ENCODE measurements at regions of chr17 and their contacts with region 1.

Region 1: DNA sequence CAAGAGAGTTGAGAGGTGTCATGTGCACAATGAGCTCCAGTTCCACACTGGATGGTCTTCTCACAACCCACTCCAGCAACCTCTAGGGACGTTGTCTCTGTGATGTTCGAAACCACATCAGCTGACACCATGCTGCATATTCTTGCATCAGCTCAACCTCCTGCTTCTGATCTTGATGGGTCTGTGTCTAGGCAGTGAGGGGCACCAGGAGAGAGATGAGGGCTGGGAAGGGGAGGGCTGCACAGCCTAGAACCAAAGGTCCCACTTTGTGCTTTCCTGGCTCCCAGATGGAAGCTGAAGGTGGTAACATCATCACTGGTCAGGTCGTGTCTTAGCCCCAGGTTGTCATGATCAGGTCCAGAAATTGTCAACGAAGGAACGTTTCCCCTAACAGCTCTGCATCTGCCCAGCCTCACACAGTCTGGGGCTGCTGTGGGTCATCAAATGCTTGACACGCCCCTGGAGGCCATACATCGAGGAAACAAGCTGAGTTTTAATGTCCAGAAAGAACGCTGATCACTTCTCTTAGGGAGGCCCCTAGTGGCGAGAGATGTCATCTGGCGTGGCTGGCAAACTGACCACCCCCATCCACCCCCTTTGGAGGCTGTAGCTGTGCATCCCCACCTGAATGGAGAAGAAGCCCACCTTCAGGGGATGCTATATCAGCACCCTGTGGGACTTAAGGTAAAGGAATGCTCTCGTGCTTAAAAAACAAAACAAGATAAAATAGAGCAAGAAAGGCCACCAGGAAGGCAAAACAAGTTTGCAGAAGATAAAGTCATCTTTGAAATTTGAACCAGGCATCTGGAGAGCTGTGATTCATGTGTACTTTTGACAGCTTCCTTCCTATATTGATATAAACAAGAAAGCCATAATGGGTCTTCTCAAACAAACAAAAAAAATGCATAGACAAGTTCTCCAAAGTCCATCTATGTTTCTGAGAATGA is 58.3 kb downstream of the WIPI1 start:
- DNase-seq: peak; percentile 78 to 84
- H3K4me3 ChIP-seq: no peak overlapping the region
- H3K4me3 Mint-ChIP-seq: no peak overlapping the region
- H3K27ac Mint-ChIP-seq: no peak overlapping the region
- H3K4me1 ChIP-seq: no peaks in the 10 kb centered on the region
- H3K4me1 Mint-ChIP-seq: no peaks in the 10 kb centered on the region
- H3K27me3 ChIP-seq: no peaks in the 10 kb centered on the region
- H3K27me3 Mint-ChIP-seq: peaks cover 2% of the 10 kb centered on the region
- CTCF ChIP-seq: peak; percentile 87 to 89

Region 2: GRCh38 chr17:68247445-68248198 is 151.3 kb before region 1 on chr17 and contains the start of gene AMZ2:
- CTCF ChIA-PET with region 1: interaction called, 11 read pairs
- POLR2A ChIA-PET with region 1: no interaction called
- intact Hi-C with region 1: no loop called
- DNase-seq: peak; percentile 93 to 97
- H3K4me3 ChIP-seq: peak within 1 kb of the TSS; percentile 79
- H3K4me3 Mint-ChIP-seq: peak within 1 kb of the TSS; percentile 97
- H3K27ac Mint-ChIP-seq: peak within 1 kb of the TSS; percentile 81
- H3K4me1 ChIP-seq: peaks cover 6% of the 10 kb centered on the region
- H3K4me1 Mint-ChIP-seq: peaks cover 7% of the 10 kb centered on the region
- H3K27me3 ChIP-seq: no peaks in the 10 kb centered on the region
- H3K27me3 Mint-ChIP-seq: peaks cover 12% of the 10 kb centered on the region
- CTCF ChIP-seq: no peak
- total RNA-seq, gene AMZ2: 52.2 and 60.2 TPM in 2 replicates

Region 3: GRCh38 chr17:68260051-68260762 is 138.8 kb before region 1 on chr17:
- CTCF ChIA-PET with region 1: interaction called, 15 read pairs
- POLR2A ChIA-PET with region 1: no interaction called
- intact Hi-C with region 1: loop called (anchors 1 kb)
- DNase-seq: no peak
- H3K4me3 ChIP-seq: no peak overlapping the region
- H3K4me3 Mint-ChIP-seq: peak overlapping the region; percentile 79
- H3K27ac Mint-ChIP-seq: peak overlapping the region; percentile 57
- H3K4me1 ChIP-seq: peaks cover 8% of the 10 kb centered on the region; the same call in 1 of the 2 replicates
- H3K4me1 Mint-ChIP-seq: no peaks in the 10 kb centered on the region
- H3K27me3 ChIP-seq: no peaks in the 10 kb centered on the region
- H3K27me3 Mint-ChIP-seq: no peaks in the 10 kb centered on the region
- CTCF ChIP-seq: no peak

Region 4: GRCh38 chr17:68291844-68292695 is 106.9 kb before region 1 on chr17:
- CTCF ChIA-PET with region 1: interaction called, 14 read pairs
- POLR2A ChIA-PET with region 1: interaction called, 5 read pairs
- intact Hi-C with region 1: loop called (anchors 1 kb)
- DNase-seq: peak; percentile 79 to 86
- H3K4me3 ChIP-seq: peak overlapping the region; percentile 87
- H3K4me3 Mint-ChIP-seq: peak overlapping the region; percentile 76
- H3K27ac Mint-ChIP-seq: peak overlapping the region; percentile 76
- H3K4me1 ChIP-seq: peaks cover 6% of the 10 kb centered on the region; the same call in 1 of the 2 replicates
- H3K4me1 Mint-ChIP-seq: peaks cover 8% of the 10 kb centered on the region
- H3K27me3 ChIP-seq: no peaks in the 10 kb centered on the region
- H3K27me3 Mint-ChIP-seq: peaks cover 3% of the 10 kb centered on the region
- CTCF ChIP-seq: peak in 1 of 2 experiments; percentile 26

Region 5: GRCh38 chr17:68314916-68315535 is 83.9 kb before region 1 on chr17:
- CTCF ChIA-PET with region 1: no interaction called
- POLR2A ChIA-PET with region 1: no interaction called
- intact Hi-C with region 1: no loop called
- DNase-seq: no peak
- H3K4me3 ChIP-seq: no peak overlapping the region
- H3K4me3 Mint-ChIP-seq: no peak overlapping the region
- H3K27ac Mint-ChIP-seq: no peak overlapping the region
- H3K4me1 ChIP-seq: no peaks in the 10 kb centered on the region
- H3K4me1 Mint-ChIP-seq: peaks cover 11% of the 10 kb centered on the region
- H3K27me3 ChIP-seq: no peaks in the 10 kb centered on the region
- H3K27me3 Mint-ChIP-seq: no peaks in the 10 kb centered on the region
- CTCF ChIP-seq: no peak

Region 6: GRCh38 chr17:68327823-68328570 is 71.0 kb before region 1 on chr17:
- CTCF ChIA-PET with region 1: interaction called, 10 read pairs
- POLR2A ChIA-PET with region 1: interaction called, 3 read pairs
- intact Hi-C with region 1: loop called (anchors 2 kb)
- DNase-seq: no peak
- H3K4me3 ChIP-seq: no peak overlapping the region
- H3K4me3 Mint-ChIP-seq: peak overlapping the region; percentile 44
- H3K27ac Mint-ChIP-seq: peak overlapping the region; percentile 79
- H3K4me1 ChIP-seq: peaks cover 45% of the 10 kb centered on the region
- H3K4me1 Mint-ChIP-seq: peaks cover 37% of the 10 kb centered on the region
- H3K27me3 ChIP-seq: no peaks in the 10 kb centered on the region
- H3K27me3 Mint-ChIP-seq: peaks cover 10% of the 10 kb centered on the region
- CTCF ChIP-seq: no peak

Region 7: DNA sequence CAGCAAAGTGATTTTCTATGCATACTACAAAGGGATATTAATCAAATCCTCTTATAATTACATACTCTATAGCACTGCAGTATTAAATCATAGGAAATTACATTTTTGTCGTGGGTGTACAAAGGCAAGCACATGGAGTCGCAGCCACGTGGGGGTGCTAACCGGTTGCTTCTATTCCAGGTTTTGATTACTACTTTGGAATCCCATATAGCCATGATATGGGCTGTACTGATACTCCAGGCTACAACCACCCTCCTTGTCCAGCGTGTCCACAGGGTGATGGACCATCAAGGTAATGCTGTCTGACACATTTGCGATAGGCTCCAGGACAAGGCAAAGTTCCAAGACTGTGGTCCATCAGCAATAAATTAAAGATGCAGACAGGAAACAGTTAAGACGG is 47.6 kb before region 1 on chr17:
- CTCF ChIA-PET with region 1: interaction called, 3 read pairs
- POLR2A ChIA-PET with region 1: interaction called, 3 read pairs
- intact Hi-C with region 1: loop called (anchors 5 kb)
- DNase-seq: no peak
- H3K4me3 ChIP-seq: no peak overlapping the region
- H3K4me3 Mint-ChIP-seq: no peak overlapping the region
- H3K27ac Mint-ChIP-seq: no peak overlapping the region
- H3K4me1 ChIP-seq: no peaks in the 10 kb centered on the region
- H3K4me1 Mint-ChIP-seq: no peaks in the 10 kb centered on the region
- H3K27me3 ChIP-seq: no peaks in the 10 kb centered on the region
- H3K27me3 Mint-ChIP-seq: no peaks in the 10 kb centered on the region
- CTCF ChIP-seq: no peak

Region 8: GRCh38 chr17:68435876-68436842 is 37.2 kb after region 1 on chr17:
- CTCF ChIA-PET with region 1: interaction called, 7 read pairs
- POLR2A ChIA-PET with region 1: no interaction called
- intact Hi-C with region 1: loop called (anchors 1 kb)
- DNase-seq: peak; percentile 76 to 83
- H3K4me3 ChIP-seq: no peak overlapping the region
- H3K4me3 Mint-ChIP-seq: no peak overlapping the region
- H3K27ac Mint-ChIP-seq: no peak overlapping the region
- H3K4me1 ChIP-seq: peaks cover 12% of the 10 kb centered on the region
- H3K4me1 Mint-ChIP-seq: peaks cover 14% of the 10 kb centered on the region
- H3K27me3 ChIP-seq: no peaks in the 10 kb centered on the region
- H3K27me3 Mint-ChIP-seq: no peaks in the 10 kb centered on the region
- CTCF ChIP-seq: peak; percentile 93 to 94

Measured in Caco-2 (cell line).